OCI-LY7 (cell line): ENCODE measurements at regions of chrX and their contacts with region 1.

Region 1: DNA sequence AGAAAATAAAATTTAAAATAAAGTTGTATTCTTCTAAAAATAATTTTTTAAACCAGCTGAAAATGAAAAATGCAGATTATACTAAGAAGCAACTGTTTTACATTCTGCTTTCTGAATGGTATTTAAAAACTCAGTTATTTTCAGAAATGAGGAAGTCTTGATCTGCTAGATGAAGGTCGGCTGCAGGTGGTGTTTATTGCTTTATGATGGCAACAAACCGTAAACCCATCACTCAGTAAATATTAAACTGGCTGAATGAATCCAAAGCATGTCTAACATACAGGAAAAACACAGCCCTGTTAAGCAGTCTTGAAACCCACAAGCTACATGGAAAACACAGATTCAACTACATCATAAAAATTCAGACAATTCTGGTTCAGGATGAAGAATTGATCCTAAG is 29.3 kb downstream of the DYNLT3 start:
- DNase-seq: peak; percentile 87
- H3K4me3 ChIP-seq: peak overlapping the region; percentile 65
- H3K27ac ChIP-seq: peak overlapping the region; percentile 100
- H3K4me1 ChIP-seq: peaks cover 96% of the 10 kb centered on the region
- CTCF ChIP-seq: no peak

Region 2: GRCh38 chrX:36867143-36867542 is 950.9 kb before region 1 on chrX:
- CTCF ChIA-PET with region 1: no interaction called
- POLR2A ChIA-PET with region 1: no interaction called
- intact Hi-C with region 1: no loop called
- DNase-seq: peak; percentile 16
- H3K4me3 ChIP-seq: no peak overlapping the region
- H3K27ac ChIP-seq: no peak overlapping the region
- H3K4me1 ChIP-seq: no peaks in the 10 kb centered on the region
- CTCF ChIP-seq: peak; percentile 76

Region 3: GRCh38 chrX:37651921-37652452 is 166.0 kb before region 1 on chrX:
- CTCF ChIA-PET with region 1: no interaction called
- POLR2A ChIA-PET with region 1: no interaction called
- intact Hi-C with region 1: no loop called
- DNase-seq: no peak
- H3K4me3 ChIP-seq: no peak overlapping the region
- H3K27ac ChIP-seq: no peak overlapping the region
- H3K4me1 ChIP-seq: no peaks in the 10 kb centered on the region
- CTCF ChIP-seq: no peak

Region 4: DNA sequence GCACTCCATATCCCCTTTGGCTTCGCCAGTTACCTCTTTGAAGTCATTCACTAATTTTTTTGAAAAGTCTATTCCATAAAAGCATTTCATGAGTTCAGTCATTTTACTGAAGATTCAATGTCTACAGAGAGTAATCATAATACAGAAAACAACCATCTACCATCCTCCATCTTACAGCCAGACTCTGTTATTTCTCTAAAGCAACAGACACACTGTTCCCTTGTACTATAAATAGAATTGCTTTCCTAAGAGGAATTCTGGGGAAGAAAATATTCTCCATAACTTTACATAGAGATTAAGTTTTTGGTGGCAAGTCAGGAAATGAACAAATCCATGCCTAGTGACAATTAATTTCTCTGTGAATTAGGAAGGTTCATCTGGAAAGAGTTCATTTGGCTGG is 95.4 kb before region 1 on chrX:
- CTCF ChIA-PET with region 1: no interaction called
- POLR2A ChIA-PET with region 1: no interaction called
- intact Hi-C with region 1: no loop called
- DNase-seq: no peak
- H3K4me3 ChIP-seq: no peak overlapping the region
- H3K27ac ChIP-seq: no peak overlapping the region
- H3K4me1 ChIP-seq: no peaks in the 10 kb centered on the region
- CTCF ChIP-seq: no peak

Region 5: DNA sequence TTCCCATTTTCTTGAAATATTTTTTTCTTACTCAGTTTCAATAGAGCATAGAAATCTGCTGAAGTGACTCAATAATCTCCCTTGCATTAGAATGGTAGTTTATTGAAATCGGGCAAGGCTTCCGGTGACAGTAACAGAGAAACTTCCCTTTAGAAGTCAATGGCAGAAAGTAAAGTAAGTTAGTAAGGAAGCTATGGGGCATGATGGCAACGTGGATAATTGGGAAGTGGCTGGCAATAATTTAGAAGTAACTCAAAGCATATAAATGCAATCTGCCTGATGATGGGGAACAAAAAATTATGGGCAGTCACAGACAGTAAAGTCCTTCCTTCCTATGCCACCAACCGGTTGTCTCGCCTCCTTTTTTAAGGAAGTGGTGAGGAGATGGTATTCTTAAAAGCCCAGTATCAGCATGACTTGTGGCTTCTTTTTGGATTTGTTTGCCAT is 30.6 kb before region 1 on chrX:
- CTCF ChIA-PET with region 1: no interaction called
- POLR2A ChIA-PET with region 1: interaction called, 65 read pairs
- intact Hi-C with region 1: loop called (anchors 5 kb)
- DNase-seq: peak; percentile 66
- H3K4me3 ChIP-seq: peak overlapping the region; percentile 58
- H3K27ac ChIP-seq: peak overlapping the region; percentile 99
- H3K4me1 ChIP-seq: peaks cover 78% of the 10 kb centered on the region
- CTCF ChIP-seq: no peak

Region 6: DNA sequence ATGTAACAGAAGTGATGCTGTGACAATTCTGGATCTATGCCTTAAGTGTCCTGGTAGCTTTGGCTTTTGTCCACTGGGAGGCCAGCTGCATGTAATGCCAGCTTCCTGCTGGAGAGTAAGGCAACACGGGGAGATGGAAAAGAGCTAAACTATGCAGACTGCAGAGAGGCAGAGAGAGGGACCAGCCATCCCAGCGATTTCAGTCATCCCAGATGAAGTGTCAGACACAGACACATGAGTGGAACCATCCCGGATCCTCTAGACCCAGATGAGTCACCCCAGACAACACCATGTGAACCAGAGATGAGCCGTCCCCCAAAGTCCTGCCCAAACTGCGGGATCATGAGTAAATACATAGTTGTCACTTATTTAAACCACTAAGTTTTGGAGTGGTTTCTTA is 388.0 kb after region 1 on chrX:
- CTCF ChIA-PET with region 1: no interaction called
- POLR2A ChIA-PET with region 1: no interaction called
- intact Hi-C with region 1: loop called (anchors 10 kb)
- DNase-seq: no peak
- H3K4me3 ChIP-seq: no peak overlapping the region
- H3K27ac ChIP-seq: peak overlapping the region; percentile 99
- H3K4me1 ChIP-seq: peaks cover 36% of the 10 kb centered on the region
- CTCF ChIP-seq: no peak